ENCODE measurements at regions of chr6 and their contacts with region 1.

Region 1: DNA sequence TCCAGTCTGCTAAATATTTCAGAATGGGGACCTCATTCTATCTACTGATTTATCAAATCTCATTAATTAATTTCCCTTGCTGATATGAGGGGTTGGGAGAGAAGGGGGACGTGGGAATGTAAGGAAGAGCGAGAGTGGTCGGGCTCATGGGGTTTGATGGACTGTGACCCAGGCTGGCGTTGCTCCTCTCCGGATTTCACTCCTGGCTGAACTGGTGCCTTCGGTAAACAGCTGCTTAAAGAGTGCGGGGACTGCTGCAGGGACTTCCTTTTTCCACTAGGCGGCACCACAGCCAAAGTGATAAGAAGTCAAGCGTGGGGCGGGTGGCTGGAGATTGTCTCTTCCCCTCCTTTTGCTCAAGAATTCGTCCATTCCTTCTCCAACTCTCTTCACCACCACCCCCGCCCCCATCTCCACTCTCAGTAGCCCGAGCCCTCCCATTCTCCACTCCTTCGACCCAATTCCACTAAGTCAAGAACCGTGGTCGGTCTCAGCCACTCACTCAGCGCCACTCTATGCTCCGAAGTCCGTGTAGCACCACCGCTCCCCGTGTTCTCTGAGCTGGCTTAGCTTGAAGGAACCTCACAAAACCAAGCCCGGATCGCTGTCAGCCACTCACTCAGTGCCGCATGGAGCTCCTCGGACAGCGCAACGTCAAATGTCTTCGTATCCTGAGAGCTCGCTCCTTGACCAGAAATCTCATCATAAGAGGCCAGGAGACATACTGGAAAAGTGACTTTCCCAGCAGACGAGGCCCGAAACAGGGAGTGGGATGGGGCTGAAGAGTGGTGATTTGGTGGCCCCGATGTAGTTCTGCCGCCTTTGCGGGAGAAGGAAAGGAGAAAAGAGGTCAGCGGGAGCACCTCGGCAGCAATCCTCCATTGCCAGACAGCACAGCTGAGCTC is 9.7 kb downstream of the TRIM31 start:
- DNase-seq: peak; percentile 82 to 84 (median 83)
- H3K4me3 ChIP-seq: peak overlapping the region; percentile 19 to 48
- H3K4me3 Mint-ChIP-seq: peak overlapping the region; percentile 84 to 94 (median 90)
- H3K27ac ChIP-seq: peak overlapping the region; percentile 20
- H3K27ac Mint-ChIP-seq: peak overlapping the region; percentile 61 to 93 (median 76)
- H3K4me1 ChIP-seq: peaks cover 37% of the 10 kb centered on the region
- H3K4me1 Mint-ChIP-seq: peaks cover 26 to 48% (median 38%) of the 10 kb centered on the region in 4 donors
- H3K27me3 ChIP-seq: peaks cover 13% of the 10 kb centered on the region
- H3K27me3 Mint-ChIP-seq: peaks cover 25 to 28% of the 10 kb centered on the region in 2 donors

Region 2: GRCh38 chr6:30061092-30061857 is 41.9 kb before region 1 on chr6 and contains the start of gene POLR1H:
- CTCF ChIA-PET with region 1: interaction called, 29 read pairs
- POLR2A ChIA-PET with region 1: interaction called, 31 read pairs
- intact Hi-C with region 1: loop called (anchors 1 kb)
- DNase-seq: peak; percentile 87 to 93 (median 88)
- H3K4me3 ChIP-seq: peak within 1 kb of the TSS; percentile 62 to 96
- H3K4me3 Mint-ChIP-seq: peak within 1 kb of the TSS; percentile 96 to 99 (median 98)
- H3K27ac ChIP-seq: peak within 1 kb of the TSS; percentile 92
- H3K27ac Mint-ChIP-seq: peak within 1 kb of the TSS; percentile 97 to 100 (median 99)
- H3K4me1 ChIP-seq: peaks cover 41% of the 10 kb centered on the region
- H3K4me1 Mint-ChIP-seq: peaks cover 16 to 49% (median 29%) of the 10 kb centered on the region in 4 donors
- H3K27me3 ChIP-seq: no peaks in the 10 kb centered on the region
- H3K27me3 Mint-ChIP-seq: no peaks in the 10 kb centered on the region
- total RNA-seq, gene POLR1H: 47.2 to 50.0 TPM

Region 3: DNA sequence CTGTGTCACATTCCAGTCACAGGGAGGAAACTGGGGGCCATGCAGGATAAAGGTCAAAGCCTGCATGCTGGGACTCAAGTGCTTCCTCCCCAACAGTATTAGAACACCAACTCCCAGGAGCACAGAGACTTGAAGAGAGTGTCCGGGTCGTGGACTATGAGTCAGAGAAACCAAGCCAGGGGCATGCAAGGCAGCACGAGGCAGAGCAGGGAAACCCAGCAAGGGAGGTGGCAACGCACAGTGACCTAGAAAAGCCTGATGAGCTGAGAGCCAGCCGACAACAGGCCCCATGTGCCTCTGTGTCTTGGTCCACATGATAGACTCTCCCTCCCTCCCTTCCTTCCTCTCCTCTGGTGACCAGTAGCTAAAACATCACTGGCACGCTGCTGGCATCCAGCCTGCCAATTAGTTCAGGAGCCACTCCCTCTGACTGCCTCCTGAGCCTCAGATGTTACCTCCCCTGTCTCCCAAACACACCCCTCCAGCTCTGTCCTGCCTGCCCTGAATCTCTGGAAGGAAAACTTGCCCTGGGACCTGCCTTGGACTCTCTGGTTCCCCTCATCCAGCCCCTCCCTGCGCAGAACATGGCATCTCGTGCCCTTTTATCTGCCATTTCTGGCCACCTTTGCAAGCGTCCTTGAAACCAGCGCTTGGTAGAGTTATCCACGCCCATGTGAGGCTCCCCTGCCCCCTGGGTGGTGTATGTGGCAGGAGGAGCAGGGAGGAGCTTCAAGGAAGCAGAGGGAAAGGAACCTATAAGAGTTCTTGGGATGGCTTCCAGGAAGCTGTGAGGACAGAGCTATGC is 11.4 kb before region 1 on chr6:
- CTCF ChIA-PET with region 1: interaction called, 37 read pairs
- POLR2A ChIA-PET with region 1: interaction called, 4 read pairs
- intact Hi-C with region 1: no loop called
- DNase-seq: no peak
- H3K4me3 ChIP-seq: no peak overlapping the region
- H3K4me3 Mint-ChIP-seq: no peak overlapping the region
- H3K27ac ChIP-seq: no peak overlapping the region
- H3K27ac Mint-ChIP-seq: no peak overlapping the region
- H3K4me1 ChIP-seq: no peaks in the 10 kb centered on the region
- H3K4me1 Mint-ChIP-seq: no peaks in the 10 kb centered on the region
- H3K27me3 ChIP-seq: peaks cover 31% of the 10 kb centered on the region
- H3K27me3 Mint-ChIP-seq: peaks cover 44 to 46% of the 10 kb centered on the region in 2 donors

Region 4: GRCh38 chr6:30130887-30131862 is 28.0 kb after region 1 on chr6:
- CTCF ChIA-PET with region 1: interaction called, 263 read pairs
- POLR2A ChIA-PET with region 1: interaction called, 38 read pairs
- intact Hi-C with region 1: loop called (anchors 1 kb)
- DNase-seq: peak; percentile 74 to 80 (median 79)
- H3K4me3 ChIP-seq: no peak overlapping the region
- H3K4me3 Mint-ChIP-seq: peak overlapping the region in 5 of 8 donors; percentile 17 to 35 (median 21)
- H3K27ac ChIP-seq: no peak overlapping the region
- H3K27ac Mint-ChIP-seq: peak overlapping the region in 3 of 7 donors; percentile 0 to 33 (median 3)
- H3K4me1 ChIP-seq: peaks cover 7% of the 10 kb centered on the region
- H3K4me1 Mint-ChIP-seq: peaks cover 4 to 9% (median 5%) of the 10 kb centered on the region in 4 donors
- H3K27me3 ChIP-seq: peaks cover 34% of the 10 kb centered on the region
- H3K27me3 Mint-ChIP-seq: peaks cover 34 to 41% of the 10 kb centered on the region in 2 donors

Region 5: DNA sequence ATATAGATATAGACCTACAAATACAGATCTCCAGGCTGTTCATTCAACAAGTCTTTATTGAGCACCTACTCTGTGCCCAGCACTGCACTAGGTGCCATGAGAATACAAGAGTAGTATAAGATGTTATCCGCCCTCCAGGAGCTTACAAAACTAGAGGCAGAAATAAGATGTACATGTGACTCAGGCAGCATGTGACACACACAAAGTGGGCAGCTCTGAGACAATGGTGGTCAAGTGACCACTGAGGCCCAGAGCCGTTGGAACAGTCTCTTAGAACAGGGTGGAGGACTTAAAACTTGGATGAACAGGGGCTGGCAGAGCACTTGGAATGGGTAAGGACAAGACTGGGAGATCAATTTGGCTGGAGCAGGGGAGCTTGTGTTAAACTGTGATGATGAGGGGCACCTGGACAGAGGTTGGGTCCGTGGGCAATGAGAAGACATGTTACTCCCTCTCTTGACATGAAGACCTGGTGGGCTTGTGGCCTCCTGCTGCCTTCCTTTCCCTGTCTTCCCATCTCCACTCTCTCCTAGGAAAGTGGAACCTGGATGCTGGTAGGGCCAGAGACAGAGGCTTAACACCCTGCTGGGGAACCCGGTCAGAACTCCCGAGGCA is 81.3 kb after region 1 on chr6:
- CTCF ChIA-PET with region 1: no interaction called
- POLR2A ChIA-PET with region 1: no interaction called
- intact Hi-C with region 1: no loop called
- DNase-seq: no peak
- H3K4me3 ChIP-seq: no peak overlapping the region
- H3K4me3 Mint-ChIP-seq: no peak overlapping the region
- H3K27ac ChIP-seq: no peak overlapping the region
- H3K27ac Mint-ChIP-seq: peak overlapping the region in 3 of 7 donors; percentile 12 to 43 (median 13)
- H3K4me1 ChIP-seq: no peaks in the 10 kb centered on the region
- H3K4me1 Mint-ChIP-seq: no peaks in the 10 kb centered on the region
- H3K27me3 ChIP-seq: peaks cover 5% of the 10 kb centered on the region
- H3K27me3 Mint-ChIP-seq: peaks cover 5 to 8% of the 10 kb centered on the region in 2 donors

Region 6: GRCh38 chr6:30396833-30397479 is 293.7 kb after region 1 on chr6:
- CTCF ChIA-PET with region 1: interaction called, 4 read pairs
- POLR2A ChIA-PET with region 1: no interaction called
- intact Hi-C with region 1: loop called (anchors 2 kb)
- DNase-seq: peak; percentile 72 to 77 (median 75)
- H3K4me3 ChIP-seq: no peak overlapping the region
- H3K4me3 Mint-ChIP-seq: no peak overlapping the region
- H3K27ac ChIP-seq: no peak overlapping the region
- H3K27ac Mint-ChIP-seq: no peak overlapping the region
- H3K4me1 ChIP-seq: no peaks in the 10 kb centered on the region
- H3K4me1 Mint-ChIP-seq: peaks cover 0 to 5% (median 0%) of the 10 kb centered on the region in 4 donors
- H3K27me3 ChIP-seq: no peaks in the 10 kb centered on the region
- H3K27me3 Mint-ChIP-seq: peaks cover 11 to 26% of the 10 kb centered on the region in 2 donors

Region 7: DNA sequence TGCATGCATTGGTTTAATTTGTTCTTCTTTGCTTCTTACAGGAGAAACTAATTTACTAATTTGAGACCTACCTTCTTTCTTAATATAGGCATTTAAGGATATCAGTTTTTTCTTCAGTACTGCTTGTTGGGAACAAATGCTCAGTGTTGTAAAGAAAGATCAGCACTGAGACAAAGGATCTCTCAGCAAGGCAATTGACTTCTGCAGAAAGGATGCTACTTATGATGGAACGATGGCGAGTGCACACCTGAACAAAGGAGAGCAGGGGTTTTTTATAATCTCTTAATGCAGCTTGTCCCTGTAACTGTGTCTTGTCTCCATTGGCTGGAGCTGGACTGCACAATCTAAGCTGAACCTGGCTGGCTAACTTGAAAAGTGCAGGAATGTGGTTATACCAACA is 306.0 kb after region 1 on chr6:
- CTCF ChIA-PET with region 1: no interaction called
- POLR2A ChIA-PET with region 1: no interaction called
- intact Hi-C with region 1: no loop called
- DNase-seq: no peak
- H3K4me3 ChIP-seq: no peak overlapping the region
- H3K4me3 Mint-ChIP-seq: no peak overlapping the region
- H3K27ac ChIP-seq: no peak overlapping the region
- H3K27ac Mint-ChIP-seq: no peak overlapping the region
- H3K4me1 ChIP-seq: peaks cover 3% of the 10 kb centered on the region
- H3K4me1 Mint-ChIP-seq: peaks cover 8 to 16% (median 13%) of the 10 kb centered on the region in 4 donors
- H3K27me3 ChIP-seq: no peaks in the 10 kb centered on the region
- H3K27me3 Mint-ChIP-seq: peaks cover 30 to 50% of the 10 kb centered on the region in 2 donors

Region 8: GRCh38 chr6:31806465-31807272 is 1703.4 kb after region 1 on chr6 and contains the start of gene LSM2:
- CTCF ChIA-PET with region 1: no interaction called
- POLR2A ChIA-PET with region 1: no interaction called
- intact Hi-C with region 1: no loop called
- DNase-seq: peak; percentile 97 to 98 (median 97)
- H3K4me3 ChIP-seq: peak within 1 kb of the TSS; percentile 84 to 89
- H3K4me3 Mint-ChIP-seq: peak within 1 kb of the TSS; percentile 86 to 97 (median 90)
- H3K27ac ChIP-seq: peak within 1 kb of the TSS; percentile 80
- H3K27ac Mint-ChIP-seq: peak within 1 kb of the TSS; percentile 89 to 97 (median 93)
- H3K4me1 ChIP-seq: peaks cover 23% of the 10 kb centered on the region
- H3K4me1 Mint-ChIP-seq: peaks cover 11 to 37% (median 27%) of the 10 kb centered on the region in 4 donors
- H3K27me3 ChIP-seq: no peaks in the 10 kb centered on the region
- H3K27me3 Mint-ChIP-seq: no peaks in the 10 kb centered on the region
- total RNA-seq, gene LSM2: 30.0 to 34.6 TPM